ENCODE measurements at regions of chr6 and their contacts with region 1.

Region 1: DNA sequence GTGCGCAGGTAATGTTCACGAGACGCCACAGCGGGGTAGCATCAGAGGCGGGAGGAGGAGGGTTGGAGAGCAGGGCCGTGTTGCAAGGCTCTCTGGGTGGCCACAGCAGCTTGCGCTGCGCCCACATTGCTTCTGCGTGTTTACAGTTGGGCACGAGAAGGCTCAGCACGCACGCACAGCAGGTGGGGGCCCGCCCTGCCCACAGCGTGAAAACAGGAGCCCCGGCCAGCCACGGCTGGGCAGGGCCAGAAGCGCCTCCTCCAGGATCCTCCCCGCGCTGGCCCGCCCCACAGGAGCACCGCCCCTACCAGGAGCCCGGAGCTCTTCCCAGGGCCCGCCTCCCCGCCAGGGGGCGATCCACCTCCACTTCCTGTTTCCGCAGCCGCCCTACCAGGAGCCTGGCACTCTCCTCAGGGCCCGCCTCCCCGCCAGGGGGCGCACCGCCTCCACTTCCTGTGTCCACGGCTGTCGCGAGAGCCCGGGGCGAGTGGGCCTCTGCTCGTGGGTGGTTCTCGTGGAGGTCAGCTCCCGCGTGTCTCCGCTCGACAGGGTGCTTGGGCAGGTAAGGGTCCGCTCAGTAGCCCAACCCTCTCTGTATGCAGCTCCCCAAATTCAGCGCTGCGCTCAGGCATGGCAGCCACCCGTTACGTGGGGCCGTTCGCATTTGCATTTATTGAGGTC is at the start of gene FAM50B:
- DNase-seq: peak; percentile 81
- H3K4me3 ChIP-seq: peak within 1 kb of the TSS; percentile 44 to 62 (median 59)
- H3K27ac ChIP-seq: peak within 1 kb of the TSS; percentile 87
- H3K4me1 ChIP-seq: peaks cover 12% of the 10 kb centered on the region
- H3K27me3 ChIP-seq: no peaks in the 10 kb centered on the region
- CTCF ChIP-seq: peak; percentile 48 to 91
- total RNA-seq, gene FAM50B: 4.4 to 7.3 TPM

Region 2: DNA sequence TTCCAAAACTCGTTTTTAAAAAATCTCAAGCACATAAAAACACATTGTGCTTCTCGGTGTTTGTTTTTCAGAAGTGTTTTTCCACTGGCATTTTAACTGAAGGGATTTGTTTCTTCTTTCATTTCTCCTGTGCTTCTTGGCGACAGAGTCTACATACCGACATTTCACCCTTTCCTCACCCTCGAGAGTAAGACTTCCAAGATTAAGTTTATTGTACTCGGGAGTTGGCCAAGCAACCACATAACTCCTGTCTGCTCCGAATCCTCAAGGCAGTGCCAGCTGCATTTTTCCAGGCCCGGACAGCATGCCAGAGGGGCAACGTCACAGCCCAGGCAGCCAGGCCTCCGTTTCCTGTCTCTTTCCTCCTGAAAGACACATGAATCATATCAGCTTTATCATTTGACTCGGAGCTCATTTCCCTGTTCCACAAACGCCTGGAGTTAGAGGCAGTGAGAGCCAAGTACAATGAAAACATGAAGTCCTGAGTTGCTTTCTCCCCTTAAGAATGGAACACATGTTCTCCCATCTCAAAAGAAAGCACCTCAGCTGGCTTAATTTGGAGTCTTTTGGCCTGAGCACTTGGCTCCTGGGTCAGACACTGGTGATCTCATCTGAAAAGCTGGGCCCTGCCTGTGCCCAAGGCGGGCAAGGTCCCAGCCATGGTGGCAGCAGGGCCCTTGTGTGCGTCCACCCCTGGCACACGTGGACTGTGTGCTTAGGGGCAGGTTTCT is 23.0 kb before region 1 on chr6:
- CTCF ChIA-PET with region 1: interaction called, 8 read pairs
- dilution Hi-C with region 1: no loop called
- in situ Hi-C with region 1: no loop called
- intact Hi-C with region 1: loop called (anchors 1 kb)
- DNase-seq: peak; percentile 95
- H3K4me3 ChIP-seq: peak overlapping the region in 1 of 3 experiments; percentile 11
- H3K27ac ChIP-seq: peak overlapping the region; percentile 91
- H3K4me1 ChIP-seq: peaks cover 61% of the 10 kb centered on the region
- H3K27me3 ChIP-seq: no peaks in the 10 kb centered on the region
- CTCF ChIP-seq: no peak

Region 3: GRCh38 chr6:3977875-3978711 is 129.0 kb after region 1 on chr6:
- CTCF ChIA-PET with region 1: interaction called, 9 read pairs
- dilution Hi-C with region 1: no loop called
- in situ Hi-C with region 1: no loop called
- intact Hi-C with region 1: loop called (anchors 1 kb)
- DNase-seq: peak; percentile 56
- H3K4me3 ChIP-seq: no peak overlapping the region
- H3K27ac ChIP-seq: no peak overlapping the region
- H3K4me1 ChIP-seq: no peaks in the 10 kb centered on the region
- H3K27me3 ChIP-seq: no peaks in the 10 kb centered on the region
- CTCF ChIP-seq: peak; percentile 50 to 59

Region 4: DNA sequence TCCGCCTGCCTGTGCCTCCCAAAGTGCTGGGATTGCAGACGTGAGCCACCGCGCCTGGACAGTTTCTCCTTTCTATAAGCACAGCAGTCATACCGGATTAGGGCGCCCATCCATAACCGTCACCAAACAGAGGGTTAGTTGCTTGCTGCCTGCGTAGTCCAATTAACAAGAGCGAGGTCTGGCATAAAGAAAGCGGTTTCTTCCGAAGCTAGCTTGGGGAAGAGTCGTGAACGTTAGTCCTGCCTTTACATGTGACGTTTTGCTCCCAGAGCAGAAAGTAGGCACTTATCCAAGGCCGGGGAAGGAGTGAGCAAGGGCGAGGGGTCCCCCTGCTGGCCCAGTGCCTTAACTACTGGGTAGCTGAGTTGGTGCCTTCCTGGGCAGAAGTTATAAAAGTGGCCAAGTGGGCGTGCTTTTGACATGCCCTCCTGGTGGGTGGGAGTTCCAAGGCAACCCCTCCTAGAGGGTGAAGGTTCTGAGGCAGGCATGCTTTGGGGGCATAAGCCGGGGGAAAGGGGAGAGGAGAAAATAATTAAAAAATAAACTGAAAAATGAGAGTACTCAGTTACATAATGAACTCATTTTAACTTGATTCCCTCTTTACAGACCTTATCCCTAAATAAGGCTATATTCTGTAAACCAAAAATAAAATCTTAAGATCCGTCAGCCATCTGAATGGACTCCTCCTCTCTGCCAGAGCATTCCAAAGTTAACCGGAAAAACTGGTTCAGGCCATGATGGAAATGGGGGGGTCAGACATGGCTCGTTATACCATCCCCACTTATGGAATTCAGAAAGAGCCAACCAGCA is 141.8 kb after region 1 on chr6:
- CTCF ChIA-PET with region 1: no interaction called
- dilution Hi-C with region 1: no loop called
- in situ Hi-C with region 1: no loop called
- intact Hi-C with region 1: loop called (anchors 1 kb)
- DNase-seq: peak; percentile 77
- H3K4me3 ChIP-seq: peak overlapping the region; percentile 27 to 42 (median 41)
- H3K27ac ChIP-seq: peak overlapping the region; percentile 42
- H3K4me1 ChIP-seq: peaks cover 13% of the 10 kb centered on the region
- H3K27me3 ChIP-seq: no peaks in the 10 kb centered on the region
- CTCF ChIP-seq: peak; percentile 90 to 97

Region 5: GRCh38 chr6:4008324-4009047 is 159.4 kb after region 1 on chr6:
- CTCF ChIA-PET with region 1: no interaction called
- dilution Hi-C with region 1: no loop called
- in situ Hi-C with region 1: no loop called
- intact Hi-C with region 1: loop called (anchors 1 kb)
- DNase-seq: peak; percentile 63
- H3K4me3 ChIP-seq: no peak overlapping the region
- H3K27ac ChIP-seq: peak overlapping the region; percentile 18
- H3K4me1 ChIP-seq: peaks cover 7% of the 10 kb centered on the region
- H3K27me3 ChIP-seq: no peaks in the 10 kb centered on the region
- CTCF ChIP-seq: peak; percentile 56 to 66